Mammary epithelial cell (primary cell): ENCODE measurements at regions of chr18 and their contacts with region 1.

Region 1: GRCh38 chr18:3983351-3983969 is 471.6 kb downstream of the DLGAP1 start:
- DNase-seq: peak; percentile 97
- H3K4me3 ChIP-seq: no peak overlapping the region
- H3K27ac ChIP-seq: peak overlapping the region; percentile 98
- H3K4me1 ChIP-seq: peaks cover 38% of the 10 kb centered on the region
- H3K27me3 ChIP-seq: no peaks in the 10 kb centered on the region
- CTCF ChIP-seq: no peak

Region 2: DNA sequence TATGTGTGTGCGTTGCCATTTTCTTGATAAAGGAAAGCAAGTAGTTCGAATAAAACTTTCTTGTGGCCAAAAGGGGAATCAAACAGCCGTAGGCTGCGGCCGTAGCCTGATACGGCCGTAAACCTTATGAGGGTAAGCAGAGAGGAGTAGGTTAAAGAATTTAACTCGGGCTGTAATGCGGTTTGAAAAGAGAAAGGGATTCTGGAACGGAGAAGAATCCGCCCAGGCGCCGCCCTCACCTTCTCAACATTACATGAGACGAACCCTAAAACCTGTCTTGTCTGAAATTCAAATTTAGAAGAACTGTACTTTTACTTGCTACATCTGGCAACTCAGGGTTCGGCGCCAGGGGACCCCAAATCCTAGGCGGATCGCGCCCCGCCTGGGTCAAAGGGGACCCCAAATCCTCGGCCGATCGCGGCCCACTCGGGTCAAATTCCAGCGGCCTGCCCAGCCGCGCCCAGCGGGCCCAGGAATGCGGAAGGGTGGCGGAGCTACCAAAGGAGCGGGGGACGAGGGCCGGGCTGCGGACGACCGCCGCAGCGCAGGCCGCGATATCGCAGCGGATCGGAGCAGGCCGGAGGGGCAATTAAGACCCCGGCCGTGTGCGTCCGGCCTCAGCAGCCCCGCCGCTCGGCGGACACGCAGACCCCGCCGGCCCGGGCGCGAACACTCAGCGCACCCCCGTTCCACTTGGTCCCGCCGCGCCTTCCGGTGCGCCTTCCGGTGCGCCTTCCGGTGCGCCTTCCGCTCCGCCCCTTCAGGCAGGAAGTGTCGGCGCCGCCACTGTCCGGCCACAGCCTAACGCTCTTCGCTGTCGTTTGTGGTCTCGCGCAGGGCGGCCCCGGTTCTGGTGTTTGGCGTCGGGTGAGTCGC is 721.9 kb before region 1 on chr18 and contains the start of gene MYL12B:
- CTCF ChIA-PET with region 1: no interaction called
- dilution Hi-C with region 1: no loop called
- in situ Hi-C with region 1: no loop called
- intact Hi-C with region 1: loop called (anchors 10 kb)
- DNase-seq: peak; percentile 82
- H3K4me3 ChIP-seq: peak within 1 kb of the TSS; percentile 77 to 93 (median 85)
- H3K27ac ChIP-seq: peak within 1 kb of the TSS; percentile 97
- H3K4me1 ChIP-seq: peaks cover 27% of the 10 kb centered on the region
- H3K27me3 ChIP-seq: no peaks in the 10 kb centered on the region
- CTCF ChIP-seq: peak in 1 of 2 donors; percentile 8
- total RNA-seq, gene MYL12B: 464 to 468 TPM

Region 3: GRCh38 chr18:3579701-3580100 is 403.8 kb before region 1 on chr18:
- CTCF ChIA-PET with region 1: no interaction called
- dilution Hi-C with region 1: no loop called
- in situ Hi-C with region 1: no loop called
- intact Hi-C with region 1: no loop called
- DNase-seq: peak; percentile 84
- H3K4me3 ChIP-seq: no peak overlapping the region
- H3K27ac ChIP-seq: peak overlapping the region; percentile 42
- H3K4me1 ChIP-seq: peaks cover 17% of the 10 kb centered on the region
- H3K27me3 ChIP-seq: no peaks in the 10 kb centered on the region
- CTCF ChIP-seq: no peak

Region 4: GRCh38 chr18:3816610-3817363 is 166.7 kb before region 1 on chr18:
- CTCF ChIA-PET with region 1: no interaction called
- dilution Hi-C with region 1: no loop called
- in situ Hi-C with region 1: loop called in 1 of 2 experiments (anchors 10 kb)
- intact Hi-C with region 1: no loop called
- DNase-seq: peak; percentile 92
- H3K4me3 ChIP-seq: no peak overlapping the region
- H3K27ac ChIP-seq: peak overlapping the region; percentile 80
- H3K4me1 ChIP-seq: peaks cover 13% of the 10 kb centered on the region
- H3K27me3 ChIP-seq: no peaks in the 10 kb centered on the region
- CTCF ChIP-seq: no peak

Region 5: DNA sequence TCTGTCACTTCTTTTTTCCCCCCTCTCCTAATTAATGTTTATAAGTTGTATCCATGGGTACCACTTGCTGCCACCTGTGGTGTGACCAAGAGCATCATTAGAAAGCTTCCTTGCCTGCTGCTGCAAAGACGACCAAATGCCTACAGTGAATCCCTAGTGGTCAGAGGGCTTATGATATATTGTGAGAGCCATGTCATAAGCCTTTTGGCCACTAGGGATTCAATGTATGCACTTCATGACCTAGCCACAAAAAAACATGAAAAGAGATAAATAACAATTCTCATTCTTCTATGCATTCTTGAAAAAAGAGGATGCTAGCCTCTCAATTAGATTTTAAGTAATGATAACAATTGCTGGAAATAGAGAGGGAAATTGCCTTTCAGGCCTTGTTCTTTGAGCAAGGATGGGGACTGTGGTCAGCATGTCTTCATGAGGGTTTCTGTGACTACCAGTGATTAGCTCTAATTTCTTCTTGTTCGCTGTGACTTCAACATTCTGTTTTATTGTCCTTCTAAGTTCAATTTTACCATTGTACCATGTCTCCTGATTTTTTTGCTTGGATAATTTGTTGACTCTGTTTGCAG is 98.2 kb before region 1 on chr18:
- CTCF ChIA-PET with region 1: no interaction called
- dilution Hi-C with region 1: loop called (anchors 5 kb)
- in situ Hi-C with region 1: no loop called
- intact Hi-C with region 1: no loop called
- DNase-seq: no peak
- H3K4me3 ChIP-seq: no peak overlapping the region
- H3K27ac ChIP-seq: no peak overlapping the region
- H3K4me1 ChIP-seq: peaks cover 16% of the 10 kb centered on the region
- H3K27me3 ChIP-seq: no peaks in the 10 kb centered on the region
- CTCF ChIP-seq: peak; percentile 24 to 46

Region 6: GRCh38 chr18:3914833-3915610 is 68.4 kb before region 1 on chr18:
- CTCF ChIA-PET with region 1: no interaction called
- dilution Hi-C with region 1: no loop called
- in situ Hi-C with region 1: no loop called
- intact Hi-C with region 1: loop called (anchors 5 kb)
- DNase-seq: peak; percentile 56
- H3K4me3 ChIP-seq: no peak overlapping the region
- H3K27ac ChIP-seq: no peak overlapping the region
- H3K4me1 ChIP-seq: peaks cover 7% of the 10 kb centered on the region
- H3K27me3 ChIP-seq: no peaks in the 10 kb centered on the region
- CTCF ChIP-seq: no peak

Region 7: DNA sequence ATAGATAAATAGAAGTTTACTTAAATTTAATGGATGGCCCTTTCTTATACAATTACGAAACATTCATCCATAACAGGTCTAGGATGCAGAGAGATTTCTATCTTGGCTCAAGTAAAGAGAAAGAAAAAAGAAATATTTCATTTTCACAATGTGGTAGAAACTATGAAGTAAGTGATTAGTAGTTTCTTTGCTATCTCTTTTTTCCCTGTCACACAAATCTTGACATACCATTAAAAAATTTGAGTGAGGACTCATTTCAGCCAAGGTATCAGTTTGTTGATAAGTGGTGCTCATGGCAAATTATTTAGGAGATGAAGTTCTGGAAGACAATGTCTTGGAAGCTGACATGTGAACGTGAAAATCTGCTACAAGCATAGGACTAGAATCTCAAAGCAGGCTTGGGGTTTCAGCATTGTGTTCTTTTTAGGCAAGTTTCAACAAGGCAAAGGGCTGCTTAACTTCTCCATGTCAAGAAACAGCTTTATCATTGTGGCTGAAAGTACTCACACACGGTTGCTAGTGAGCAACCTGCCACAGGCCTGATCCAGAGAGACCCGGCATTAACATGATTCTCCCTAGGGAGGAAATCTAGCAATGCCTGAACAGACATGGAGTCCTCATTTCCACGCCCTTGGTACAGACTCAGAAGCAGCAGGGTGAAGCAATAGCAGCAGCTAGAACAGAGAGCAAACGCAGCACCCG is 57.1 kb after region 1 on chr18:
- CTCF ChIA-PET with region 1: no interaction called
- dilution Hi-C with region 1: no loop called
- in situ Hi-C with region 1: no loop called
- intact Hi-C with region 1: no loop called
- DNase-seq: peak; percentile 7
- H3K4me3 ChIP-seq: no peak overlapping the region
- H3K27ac ChIP-seq: no peak overlapping the region
- H3K4me1 ChIP-seq: no peaks in the 10 kb centered on the region
- H3K27me3 ChIP-seq: no peaks in the 10 kb centered on the region
- CTCF ChIP-seq: no peak